T-cell (primary cell): ENCODE measurements at regions of chr1 and their contacts with region 1.

Region 1: GRCh38 chr1:243814718-243815117 is 35.3 kb downstream of the AKT3 start:
- DNase-seq: no peak
- ATAC-seq: no peak
- H3K4me3 ChIP-seq: no peak overlapping the region
- H3K4me3 Mint-ChIP-seq: no peak overlapping the region
- H3K27ac ChIP-seq: no peak overlapping the region
- H3K27ac Mint-ChIP-seq: no peak overlapping the region
- H3K4me1 ChIP-seq: no peaks in the 10 kb centered on the region
- H3K4me1 Mint-ChIP-seq: peaks cover 16 to 37% (median 29%) of the 10 kb centered on the region in 3 donors
- H3K27me3 ChIP-seq: no peaks in the 10 kb centered on the region
- H3K27me3 Mint-ChIP-seq: no peaks in the 10 kb centered on the region

Region 2: GRCh38 chr1:243837907-243838535 is 23.3 kb after region 1 on chr1:
- CTCF ChIA-PET with region 1: no interaction called
- POLR2A ChIA-PET with region 1: interaction called in 1 of 2 experiments, 16 read pairs
- DNase-seq: peak in 1 of 35 experiments; percentile 58
- ATAC-seq: peak; percentile 91 to 95 (median 94)
- H3K4me3 ChIP-seq: no peak overlapping the region
- H3K4me3 Mint-ChIP-seq: peak overlapping the region; percentile 40 to 50 (median 43)
- H3K27ac ChIP-seq: peak overlapping the region; percentile 69
- H3K27ac Mint-ChIP-seq: peak overlapping the region; percentile 91 to 93
- H3K4me1 ChIP-seq: peaks cover 3 to 15% of the 10 kb centered on the region in 2 experiments
- H3K4me1 Mint-ChIP-seq: peaks cover 51 to 64% (median 51%) of the 10 kb centered on the region in 3 donors
- H3K27me3 ChIP-seq: no peaks in the 10 kb centered on the region
- H3K27me3 Mint-ChIP-seq: no peaks in the 10 kb centered on the region